BJ (cell line): ENCODE measurements at regions of chr15 and their contacts with region 1.

Region 1: DNA sequence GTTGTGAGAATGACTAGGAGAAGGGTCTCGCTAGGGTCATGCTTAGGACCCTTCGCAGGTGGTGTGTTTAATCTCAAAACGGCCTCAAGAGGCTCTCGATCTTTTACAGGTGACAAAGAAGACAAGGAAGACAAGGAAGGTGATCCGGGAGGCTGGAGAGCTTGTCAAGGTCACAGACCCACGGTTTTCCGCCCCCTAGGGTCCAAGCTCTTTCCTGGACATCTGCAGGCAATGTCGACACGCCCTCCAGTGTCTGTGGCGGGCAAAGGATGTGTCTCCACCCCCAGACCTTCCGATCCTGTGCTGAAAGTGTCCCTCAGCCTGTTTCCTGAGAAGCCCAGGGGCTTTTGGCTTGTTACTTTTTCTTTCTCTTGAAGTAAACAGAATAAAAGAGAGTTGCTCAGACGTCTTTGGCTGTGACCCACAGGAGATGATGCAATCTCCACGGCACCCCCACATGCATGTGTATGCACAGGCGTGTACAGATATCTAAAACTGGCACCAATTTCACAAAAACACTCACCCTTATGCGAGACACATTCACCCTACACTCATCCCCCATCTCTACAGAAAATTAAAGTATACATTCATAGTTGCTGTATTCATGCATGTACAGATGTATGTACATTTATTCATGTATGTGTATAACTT is 108.8 kb downstream of the KLF13 start:
- DNase-seq: peak; percentile 50
- H3K4me3 ChIP-seq: no peak overlapping the region
- H3K27me3 ChIP-seq: no peaks in the 10 kb centered on the region
- CTCF ChIP-seq: peak; percentile 85

Region 2: GRCh38 chr15:31215490-31216214 is 219.7 kb before region 1 on chr15:
- CTCF ChIA-PET with region 1: interaction called, 15 read pairs
- POLR2A ChIA-PET with region 1: no interaction called
- DNase-seq: no peak
- H3K4me3 ChIP-seq: peak overlapping the region; percentile 44
- H3K27me3 ChIP-seq: peaks cover 3% of the 10 kb centered on the region
- CTCF ChIP-seq: peak; percentile 86

Region 3: GRCh38 chr15:31402511-31403056 is 32.8 kb before region 1 on chr15:
- CTCF ChIA-PET with region 1: no interaction called
- POLR2A ChIA-PET with region 1: no interaction called
- DNase-seq: no peak
- H3K4me3 ChIP-seq: no peak overlapping the region
- H3K27me3 ChIP-seq: peaks cover 1% of the 10 kb centered on the region; the same call in 1 of the 2 replicates
- CTCF ChIP-seq: no peak